HEK293T (cell line): ENCODE measurements at regions of chr14 and their contacts with region 1.

Region 1: GRCh38 chr14:21071225-21072030 is 1.3 kb downstream of the ARHGEF40 start:
- DNase-seq: peak; percentile 79

Region 2: DNA sequence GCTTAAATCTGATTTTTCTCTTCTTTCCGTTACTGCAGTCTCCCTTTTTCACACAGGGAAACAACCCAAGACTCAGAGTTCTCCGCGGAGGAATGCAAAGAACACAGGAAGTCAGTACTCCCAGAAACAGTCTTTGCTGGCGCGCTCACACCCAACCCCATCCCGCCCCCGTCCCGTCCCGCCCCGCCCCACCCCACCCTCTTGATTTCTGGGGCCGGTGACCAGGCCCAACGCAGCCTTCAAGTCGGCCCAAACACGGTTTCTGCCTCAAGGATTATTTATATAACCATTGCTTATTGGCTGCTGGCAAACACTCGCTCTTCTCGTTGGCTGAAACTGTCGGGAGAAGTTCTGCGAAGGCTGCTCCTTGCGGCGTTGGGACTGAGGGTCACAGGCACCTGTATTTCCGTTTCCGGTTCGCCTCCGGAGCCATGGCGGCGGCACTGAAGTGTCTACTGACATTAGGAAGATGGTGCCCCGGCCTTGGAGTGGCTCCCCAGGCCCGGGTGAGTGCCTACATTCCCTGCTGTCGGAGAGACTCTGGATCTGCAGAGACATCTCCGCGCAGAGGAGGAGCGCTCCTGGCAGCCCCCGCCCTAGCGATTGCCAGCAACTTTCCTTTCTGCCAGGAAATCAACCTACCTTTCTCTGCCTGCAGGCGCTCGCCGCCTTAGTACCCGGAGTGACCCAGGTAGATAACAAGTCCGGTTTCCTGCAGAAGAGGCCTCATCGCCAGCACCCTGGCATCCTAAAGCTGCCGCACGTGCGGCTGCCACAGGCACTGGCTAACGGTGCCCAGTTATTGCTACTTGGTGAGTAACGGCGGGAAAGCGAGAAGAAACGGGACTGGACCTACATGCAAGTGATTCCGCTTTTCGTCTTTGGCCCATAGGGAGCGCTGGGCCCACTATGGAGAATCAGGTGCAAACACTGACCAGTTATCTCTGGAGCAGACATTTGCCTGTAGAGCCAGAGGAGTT is 81.6 kb before region 1 on chr14 and contains the start of gene METTL17:
- CTCF ChIA-PET with region 1: no interaction called
- POLR2A ChIA-PET with region 1: no interaction called
- DNase-seq: peak; percentile 90

Region 3: DNA sequence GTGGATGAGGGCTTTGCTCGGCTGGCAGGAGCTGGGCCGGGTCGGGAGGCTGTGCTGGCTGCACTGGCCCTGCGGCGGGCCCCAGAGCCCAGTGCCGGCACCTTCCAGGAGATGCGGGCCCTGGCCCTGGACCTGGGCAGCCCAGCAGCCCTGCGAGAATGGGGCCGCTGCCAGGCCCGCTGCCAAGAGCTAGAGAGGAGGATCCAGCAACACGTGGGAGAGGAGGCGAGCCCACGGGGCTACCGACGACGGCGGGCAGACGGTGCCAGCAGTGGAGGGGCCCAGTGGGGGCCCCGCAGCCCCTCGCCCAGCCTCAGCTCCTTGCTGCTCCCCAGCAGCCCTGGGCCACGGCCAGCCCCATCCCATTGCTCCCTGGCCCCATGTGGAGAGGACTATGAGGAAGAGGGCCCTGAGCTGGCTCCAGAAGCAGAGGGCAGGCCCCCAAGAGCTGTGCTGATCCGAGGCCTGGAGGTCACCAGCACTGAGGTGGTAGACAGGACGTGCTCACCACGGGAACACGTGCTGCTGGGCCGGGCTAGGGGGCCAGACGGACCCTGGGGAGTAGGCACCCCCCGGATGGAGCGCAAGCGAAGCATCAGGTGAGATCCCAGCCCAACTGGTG is 10.2 kb after region 1 on chr14:
- CTCF ChIA-PET with region 1: interaction called, 10 read pairs
- POLR2A ChIA-PET with region 1: interaction called, 37 read pairs
- DNase-seq: no peak

Region 4: GRCh38 chr14:21092273-21093011 is 21.0 kb after region 1 on chr14:
- CTCF ChIA-PET with region 1: interaction called, 68 read pairs
- POLR2A ChIA-PET with region 1: interaction called, 37 read pairs
- DNase-seq: peak; percentile 88

Region 5: DNA sequence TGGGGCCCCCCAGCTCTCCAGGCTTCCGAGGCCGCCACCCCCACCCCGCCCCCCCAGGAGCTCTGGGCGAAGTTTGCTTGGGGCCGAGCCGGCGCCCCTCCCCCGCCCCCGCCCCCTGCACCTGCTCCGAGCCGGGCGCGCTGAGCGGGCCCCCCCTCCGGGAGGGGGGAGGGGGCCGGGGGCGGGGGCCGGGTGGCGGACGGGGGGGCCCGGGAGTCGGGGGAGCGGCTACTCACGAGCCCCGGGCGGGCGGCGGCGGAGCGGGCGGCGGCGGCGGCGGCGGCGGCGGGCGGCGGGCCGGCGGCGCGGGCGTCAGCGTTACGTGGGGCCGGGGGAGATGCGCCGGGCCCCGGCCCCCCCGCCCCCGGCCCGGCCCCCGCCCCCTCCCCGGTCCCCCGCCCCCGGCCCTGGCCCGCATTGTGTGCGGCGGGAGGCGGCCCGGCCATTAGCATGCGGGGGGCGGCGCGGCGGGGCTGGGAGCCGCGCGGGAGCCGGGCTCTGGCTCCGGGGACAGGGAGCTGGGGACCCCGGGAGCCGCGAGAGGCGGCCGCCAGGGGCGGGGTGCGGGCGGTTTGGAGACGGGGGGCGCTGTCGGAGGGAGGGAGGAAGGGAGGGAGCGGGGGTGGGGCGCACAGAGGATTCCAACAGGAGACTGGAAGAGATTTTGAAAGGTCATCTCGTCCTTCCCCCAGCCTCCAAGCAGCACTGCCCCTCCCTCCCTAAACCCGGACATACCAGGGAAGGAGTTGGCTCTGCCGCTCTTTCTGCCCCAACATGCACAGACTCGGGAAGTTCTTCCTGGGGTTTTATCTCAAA is 26.9 kb after region 1 on chr14 and contains the start of gene ZNF219:
- CTCF ChIA-PET with region 1: interaction called, 73 read pairs
- POLR2A ChIA-PET with region 1: interaction called, 72 read pairs
- DNase-seq: no peak

Region 6: DNA sequence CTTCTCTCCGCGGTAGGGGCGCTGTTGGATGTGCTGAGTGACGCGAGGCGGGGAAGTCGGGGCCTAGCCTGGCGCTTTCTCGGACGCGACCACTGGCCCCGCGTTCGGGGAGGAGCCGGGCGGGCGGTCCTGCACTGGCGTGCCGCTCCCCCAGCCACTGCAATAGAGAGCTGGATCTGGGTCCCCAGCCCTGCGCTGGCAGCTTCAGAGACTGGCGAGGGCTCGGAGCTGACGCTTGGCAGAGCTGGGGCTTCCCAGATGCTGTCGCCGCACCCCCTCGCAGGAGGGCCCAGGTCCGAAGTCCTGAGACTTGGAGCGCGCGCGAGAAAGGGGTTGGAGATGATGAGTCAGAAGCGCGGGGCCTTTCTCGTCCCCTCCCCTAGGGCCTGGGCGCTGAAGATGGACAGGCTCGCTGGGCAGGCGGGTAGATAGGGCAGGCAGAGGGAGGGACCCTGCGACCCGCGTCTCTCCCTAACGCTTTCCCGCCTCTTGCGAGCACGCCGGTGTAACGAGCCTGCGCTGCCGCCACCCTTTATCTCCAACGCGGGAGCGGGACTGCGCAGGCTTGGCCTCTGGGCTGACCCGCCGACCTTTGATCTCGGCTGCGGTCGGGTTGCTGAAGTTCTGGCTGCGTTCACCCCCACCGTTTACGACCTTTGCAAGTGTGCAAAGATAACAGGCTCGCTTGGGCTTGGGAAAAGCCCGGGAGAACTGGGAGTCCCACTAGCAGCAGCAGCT is 32.5 kb after region 1 on chr14:
- CTCF ChIA-PET with region 1: interaction called, 73 read pairs
- POLR2A ChIA-PET with region 1: interaction called, 72 read pairs
- DNase-seq: peak; percentile 94